A549 (cell line): ENCODE measurements at regions of chr19 and their contacts with region 1.

Region 1: GRCh38 chr19:21835810-21836444 is at the start of gene ZNF43:
- DNase-seq: peak; percentile 69 to 93
- ATAC-seq: peak; percentile 97 to 98
- H3K4me3 ChIP-seq: peak within 1 kb of the TSS; percentile 56
- H3K27ac ChIP-seq: peak within 1 kb of the TSS; percentile 70 to 88
- H3K4me1 ChIP-seq: no peaks in the 10 kb centered on the region; the same call in 2 of the 3 replicates
- CTCF ChIP-seq: no peak
- EP300 ChIP-seq: no peak
- POLR2A ChIP-seq: peak; percentile 43; the same call in 1 of the 2 replicates
- RAD21 ChIP-seq: no peak
- polyA plus RNA-seq, gene ZNF43: 10.0 and 15.6 TPM in 2 replicates

Region 2: GRCh38 chr19:21812450-21812849 is 23.5 kb before region 1 on chr19:
- CTCF ChIA-PET with region 1: no interaction called
- POLR2A ChIA-PET with region 1: no interaction called
- DNase-seq: no peak
- ATAC-seq: no peak
- H3K4me3 ChIP-seq: no peak overlapping the region
- H3K27ac ChIP-seq: no peak overlapping the region
- H3K4me1 ChIP-seq: no peaks in the 10 kb centered on the region
- CTCF ChIP-seq: no peak
- EP300 ChIP-seq: no peak
- POLR2A ChIP-seq: no peak
- RAD21 ChIP-seq: no peak

Region 3: GRCh38 chr19:21824679-21825078 is 11.2 kb before region 1 on chr19:
- CTCF ChIA-PET with region 1: no interaction called
- POLR2A ChIA-PET with region 1: interaction called, 11 read pairs
- DNase-seq: peak in 1 of 2 experiments; percentile 22
- ATAC-seq: peak in 1 of 2 experiments; percentile 60; a peak in 2 of 6 replicates
- H3K4me3 ChIP-seq: no peak overlapping the region
- H3K27ac ChIP-seq: peak overlapping the region in 1 of 2 experiments; percentile 59; a peak in 2 of 6 replicates
- H3K4me1 ChIP-seq: peaks cover 11% of the 10 kb centered on the region; the same call in 1 of the 3 replicates
- CTCF ChIP-seq: no peak
- EP300 ChIP-seq: no peak
- POLR2A ChIP-seq: no peak
- RAD21 ChIP-seq: no peak

Region 4: GRCh38 chr19:21851596-21852345 is 15.8 kb after region 1 on chr19:
- CTCF ChIA-PET with region 1: no interaction called
- POLR2A ChIA-PET with region 1: interaction called, 39 read pairs
- DNase-seq: peak; percentile 81 to 93
- ATAC-seq: peak; percentile 99
- H3K4me3 ChIP-seq: peak overlapping the region; percentile 66
- H3K27ac ChIP-seq: peak overlapping the region; percentile 78 to 84
- H3K4me1 ChIP-seq: 0 out of 3 replicates have a peak, but pooled peaks cover 3% of the 10 kb centered on the region
- CTCF ChIP-seq: no peak
- EP300 ChIP-seq: no peak
- POLR2A ChIP-seq: peak; percentile 40
- RAD21 ChIP-seq: no peak